ENCODE measurements at regions of chr16 and their contacts with region 1.

Region 1: DNA sequence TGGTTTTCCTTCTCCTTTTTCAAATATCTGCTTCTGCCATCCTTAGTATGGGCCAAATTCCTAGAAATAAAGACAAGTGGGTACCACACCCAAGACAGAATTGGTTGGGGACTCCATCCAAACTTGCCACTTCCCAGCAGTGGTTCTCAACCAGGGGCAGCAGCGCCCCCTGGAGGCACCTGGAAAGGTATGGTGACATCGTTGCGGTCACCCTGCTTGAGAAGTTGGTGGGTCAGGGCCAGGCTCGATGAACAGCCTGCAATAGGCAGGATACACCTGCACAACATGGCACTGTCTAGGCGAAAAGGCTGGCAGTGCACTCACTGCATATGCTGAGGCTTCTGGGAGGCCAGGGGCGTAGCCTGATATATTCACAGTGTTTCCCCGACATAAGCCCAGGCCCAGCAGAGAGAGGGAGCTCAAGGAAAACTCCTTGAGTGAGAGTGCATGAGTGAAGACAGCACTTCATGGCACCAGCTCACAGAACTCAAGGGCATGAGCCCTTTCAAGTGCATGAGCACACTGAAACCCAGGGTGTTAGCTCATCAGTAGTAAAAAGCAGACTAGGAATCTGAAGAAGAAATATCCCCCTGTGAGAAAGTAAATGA is 57.7 kb downstream of the CMC2 start:
- DNase-seq: peak; percentile 82
- ATAC-seq: peak; percentile 96
- H3K4me3 Mint-ChIP-seq: no peak overlapping the region
- H3K27ac Mint-ChIP-seq: no peak overlapping the region
- H3K4me1 Mint-ChIP-seq: no peaks in the 10 kb centered on the region
- H3K27me3 Mint-ChIP-seq: no peaks in the 10 kb centered on the region; the same call in 1 of the 2 replicates
- CTCF ChIP-seq: peak; percentile 91

Region 2: DNA sequence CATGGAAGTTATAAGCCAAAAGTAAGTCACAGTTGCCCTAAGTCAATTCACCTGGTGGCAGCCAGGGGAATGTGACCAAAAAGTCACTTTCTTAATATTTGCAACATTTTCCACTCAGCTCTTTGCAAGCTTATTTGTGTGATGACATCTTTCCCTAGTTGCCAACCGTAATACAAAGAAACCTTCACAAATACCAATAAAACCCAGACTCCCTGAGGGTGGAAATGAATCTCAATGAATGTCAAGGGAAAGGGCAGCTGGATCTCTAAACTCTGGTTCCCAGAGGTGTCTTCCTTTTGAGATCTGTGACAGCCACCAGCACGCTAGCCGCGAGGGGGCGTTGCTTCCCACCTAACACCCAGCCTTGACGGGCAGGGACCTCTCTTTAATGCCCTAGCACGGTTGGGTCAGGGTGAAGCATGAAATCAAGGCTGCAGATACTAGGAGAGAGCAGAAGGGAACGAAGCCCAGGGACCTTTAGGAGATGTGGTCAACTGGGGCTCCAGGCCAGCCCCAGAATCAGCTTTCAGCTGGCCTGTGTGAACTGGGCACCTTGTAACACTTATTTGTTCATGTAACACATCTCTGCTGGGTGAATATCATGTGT is 24.5 kb before region 1 on chr16:
- CTCF ChIA-PET with region 1: interaction called, 21 read pairs
- POLR2A ChIA-PET with region 1: no interaction called
- DNase-seq: peak; percentile 87
- ATAC-seq: peak; percentile 98
- H3K4me3 Mint-ChIP-seq: no peak overlapping the region
- H3K27ac Mint-ChIP-seq: no peak overlapping the region
- H3K4me1 Mint-ChIP-seq: no peaks in the 10 kb centered on the region
- H3K27me3 Mint-ChIP-seq: no peaks in the 10 kb centered on the region; the same call in 1 of the 2 replicates
- CTCF ChIP-seq: peak; percentile 51

Region 3: GRCh38 chr16:80931801-80932712 is 16.9 kb before region 1 on chr16:
- CTCF ChIA-PET with region 1: interaction called, 27 read pairs
- POLR2A ChIA-PET with region 1: no interaction called
- DNase-seq: peak; percentile 65
- ATAC-seq: peak; percentile 86
- H3K4me3 Mint-ChIP-seq: peak overlapping the region; percentile 78
- H3K27ac Mint-ChIP-seq: no peak overlapping the region
- H3K4me1 Mint-ChIP-seq: peaks cover 17% of the 10 kb centered on the region
- H3K27me3 Mint-ChIP-seq: peaks cover 39% of the 10 kb centered on the region
- CTCF ChIP-seq: no peak

Region 4: DNA sequence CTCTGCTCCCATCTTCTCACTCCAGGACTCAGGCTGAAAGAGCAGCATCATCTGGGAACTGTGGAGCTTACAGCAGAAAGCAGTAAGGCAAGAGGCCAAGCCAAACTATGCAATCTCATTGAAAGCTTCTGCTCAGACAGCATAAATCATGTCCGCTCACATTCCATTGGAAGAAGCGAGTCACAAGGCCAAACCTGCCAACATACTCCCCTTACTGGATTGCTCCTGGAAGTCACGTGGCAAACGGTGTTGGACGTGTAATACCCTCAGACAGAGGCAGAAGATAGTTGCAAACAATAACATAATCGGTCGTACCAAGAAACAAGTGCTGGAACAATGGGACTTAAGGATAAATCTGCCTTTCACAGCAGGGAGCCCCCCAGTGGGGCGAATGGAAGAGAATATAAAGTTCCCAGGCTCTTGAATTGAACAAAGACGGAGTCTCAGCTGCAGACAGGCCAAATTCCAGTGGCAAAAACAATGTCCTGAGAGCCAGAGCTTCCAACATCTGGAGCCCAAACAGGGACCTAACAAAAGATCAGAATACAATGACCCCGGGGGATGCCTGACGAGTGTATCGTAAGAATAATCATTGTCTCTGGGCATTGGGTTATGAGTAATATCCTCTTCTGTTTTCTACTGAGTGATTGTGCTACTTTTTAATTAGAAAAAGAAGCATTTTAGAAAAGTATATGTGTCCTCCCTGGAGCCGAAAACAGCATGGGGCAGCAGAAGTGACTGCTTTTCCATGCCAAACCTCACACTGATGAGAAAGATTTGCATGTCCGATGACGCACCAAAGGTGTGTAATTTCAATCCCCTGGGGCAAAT is 10.7 kb before region 1 on chr16:
- CTCF ChIA-PET with region 1: interaction called, 10 read pairs
- POLR2A ChIA-PET with region 1: no interaction called
- DNase-seq: no peak
- ATAC-seq: peak; percentile 73
- H3K4me3 Mint-ChIP-seq: no peak overlapping the region
- H3K27ac Mint-ChIP-seq: peak overlapping the region; percentile 84
- H3K4me1 Mint-ChIP-seq: peaks cover 10% of the 10 kb centered on the region
- H3K27me3 Mint-ChIP-seq: peaks cover 19% of the 10 kb centered on the region
- CTCF ChIP-seq: no peak